Heart right ventricle (tissue), 16 donors: ENCODE measurements at regions of chr14 and their contacts with region 1.

Region 1: DNA sequence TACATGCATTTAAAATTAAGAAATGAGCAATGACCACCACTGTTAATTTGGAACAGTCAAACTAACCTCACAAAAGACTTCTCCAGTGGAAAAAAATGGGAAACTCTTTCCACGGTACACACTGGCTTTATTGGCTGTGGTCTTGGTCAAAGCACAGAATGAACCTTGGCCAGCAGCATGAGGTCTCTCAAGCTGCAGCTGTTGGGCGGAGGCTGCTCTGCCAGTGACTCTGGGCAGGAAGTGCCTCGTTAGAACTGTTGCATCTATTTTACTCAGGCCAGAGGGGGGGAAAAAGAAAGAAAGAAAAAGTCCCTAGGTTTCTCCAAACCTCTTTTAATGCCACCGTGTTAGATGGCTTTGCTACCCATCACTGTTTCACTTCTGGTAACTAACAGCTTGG is 279.8 kb upstream of the DIO2 start:
- DNase-seq: peak; percentile 39 to 57
- ATAC-seq: peak in 7 of 8 donors; percentile 84 to 96 (median 92)
- H3K4me3 ChIP-seq: no peak overlapping the region
- H3K27ac ChIP-seq: peak overlapping the region in 6 of 10 donors; percentile 22 to 73 (median 52)
- H3K4me1 ChIP-seq: peaks cover 0 to 23% (median 0%) of the 10 kb centered on the region in 9 donors
- H3K27me3 ChIP-seq: no peaks in the 10 kb centered on the region
- CTCF ChIP-seq: no peak

Region 2: DNA sequence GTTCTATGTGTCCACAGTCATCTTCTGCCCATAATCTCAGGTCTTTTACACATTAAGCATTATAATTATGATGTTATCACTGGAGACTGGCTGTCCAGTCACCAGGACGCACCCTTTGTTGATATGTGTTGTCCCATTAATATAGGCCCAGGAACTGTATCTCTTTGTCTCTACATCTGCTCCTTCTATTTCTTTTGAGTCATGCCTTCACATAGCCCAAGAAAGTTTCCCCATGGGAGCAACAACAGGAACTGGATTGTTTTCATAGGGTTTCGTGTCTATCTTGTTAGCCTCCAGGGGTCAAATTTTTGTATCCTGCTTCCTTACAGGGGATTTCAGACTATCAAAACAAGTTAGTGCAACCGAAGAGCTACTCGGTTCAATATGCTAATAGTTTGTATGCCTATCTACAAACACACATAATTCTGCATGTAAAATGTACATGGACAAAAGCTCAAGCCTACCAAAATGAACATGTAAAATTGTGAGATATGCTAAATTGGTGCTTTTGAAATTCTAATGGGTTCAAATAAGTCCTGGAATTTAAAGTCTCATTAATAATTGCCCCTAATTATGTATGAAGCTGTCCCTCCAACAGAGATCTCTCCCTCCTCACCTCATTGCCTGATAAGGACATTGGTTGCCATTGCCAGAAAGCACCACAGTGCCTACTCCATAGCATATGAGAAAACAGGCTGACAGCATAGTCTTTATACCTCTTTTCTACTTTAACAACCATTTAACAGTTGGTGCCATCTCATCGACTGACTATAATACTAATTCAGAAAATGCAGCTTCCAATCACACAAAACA is 180.0 kb before region 1 on chr14:
- intact Hi-C with region 1: loop called in 1 of 10 experiments (anchors 5 kb)
- DNase-seq: peak in 1 of 2 donors; percentile 22
- ATAC-seq: peak in 6 of 8 donors; percentile 52 to 77 (median 72)
- H3K4me3 ChIP-seq: no peak overlapping the region
- H3K27ac ChIP-seq: peak overlapping the region in 5 of 10 donors; percentile 17 to 71 (median 34)
- H3K4me1 ChIP-seq: peaks cover 0 to 21% (median 5%) of the 10 kb centered on the region in 9 donors
- H3K27me3 ChIP-seq: no peaks in the 10 kb centered on the region
- CTCF ChIP-seq: no peak

Region 3: GRCh38 chr14:80390808-80391300 is 100.3 kb before region 1 on chr14:
- intact Hi-C with region 1: no loop called
- DNase-seq: no peak
- ATAC-seq: no peak
- H3K4me3 ChIP-seq: no peak overlapping the region
- H3K27ac ChIP-seq: no peak overlapping the region
- H3K4me1 ChIP-seq: no peaks in the 10 kb centered on the region
- H3K27me3 ChIP-seq: no peaks in the 10 kb centered on the region
- CTCF ChIP-seq: no peak

Region 4: GRCh38 chr14:80607430-80608190 is 116.5 kb after region 1 on chr14:
- intact Hi-C with region 1: loop called in 1 of 10 experiments (anchors 5 kb)
- DNase-seq: no peak
- ATAC-seq: no peak
- H3K4me3 ChIP-seq: no peak overlapping the region
- H3K27ac ChIP-seq: peak overlapping the region in 1 of 10 donors; percentile 26
- H3K4me1 ChIP-seq: peaks cover 0 to 10% (median 0%) of the 10 kb centered on the region in 9 donors
- H3K27me3 ChIP-seq: no peaks in the 10 kb centered on the region
- CTCF ChIP-seq: no peak